ENCODE measurements at regions of chr18 and their contacts with region 1.

Region 1: GRCh38 chr18:48868468-48869466 is 82.0 kb downstream of the SMAD7 start:
- DNase-seq: peak; percentile 57 to 73
- ATAC-seq: peak; percentile 74 to 91 (median 85)
- H3K4me3 ChIP-seq: no peak overlapping the region
- H3K4me3 Mint-ChIP-seq: peak overlapping the region; percentile 76
- H3K27ac ChIP-seq: peak overlapping the region; percentile 83
- H3K27ac Mint-ChIP-seq: peak overlapping the region; percentile 88 to 92
- H3K4me1 ChIP-seq: peaks cover 56% of the 10 kb centered on the region
- H3K4me1 Mint-ChIP-seq: peaks cover 28 to 47% of the 10 kb centered on the region in 2 donors
- H3K27me3 ChIP-seq: no peaks in the 10 kb centered on the region
- H3K27me3 Mint-ChIP-seq: no peaks in the 10 kb centered on the region
- CTCF ChIP-seq: no peak

Region 2: GRCh38 chr18:48605408-48605845 is 263.3 kb before region 1 on chr18:
- intact Hi-C with region 1: no loop called
- DNase-seq: no peak
- ATAC-seq: no peak
- H3K4me3 ChIP-seq: no peak overlapping the region
- H3K4me3 Mint-ChIP-seq: no peak overlapping the region
- H3K27ac ChIP-seq: no peak overlapping the region
- H3K27ac Mint-ChIP-seq: no peak overlapping the region
- H3K4me1 ChIP-seq: peaks cover 3% of the 10 kb centered on the region
- H3K4me1 Mint-ChIP-seq: peaks cover 5 to 10% of the 10 kb centered on the region in 2 donors
- H3K27me3 ChIP-seq: no peaks in the 10 kb centered on the region
- H3K27me3 Mint-ChIP-seq: no peaks in the 10 kb centered on the region
- CTCF ChIP-seq: no peak

Region 3: DNA sequence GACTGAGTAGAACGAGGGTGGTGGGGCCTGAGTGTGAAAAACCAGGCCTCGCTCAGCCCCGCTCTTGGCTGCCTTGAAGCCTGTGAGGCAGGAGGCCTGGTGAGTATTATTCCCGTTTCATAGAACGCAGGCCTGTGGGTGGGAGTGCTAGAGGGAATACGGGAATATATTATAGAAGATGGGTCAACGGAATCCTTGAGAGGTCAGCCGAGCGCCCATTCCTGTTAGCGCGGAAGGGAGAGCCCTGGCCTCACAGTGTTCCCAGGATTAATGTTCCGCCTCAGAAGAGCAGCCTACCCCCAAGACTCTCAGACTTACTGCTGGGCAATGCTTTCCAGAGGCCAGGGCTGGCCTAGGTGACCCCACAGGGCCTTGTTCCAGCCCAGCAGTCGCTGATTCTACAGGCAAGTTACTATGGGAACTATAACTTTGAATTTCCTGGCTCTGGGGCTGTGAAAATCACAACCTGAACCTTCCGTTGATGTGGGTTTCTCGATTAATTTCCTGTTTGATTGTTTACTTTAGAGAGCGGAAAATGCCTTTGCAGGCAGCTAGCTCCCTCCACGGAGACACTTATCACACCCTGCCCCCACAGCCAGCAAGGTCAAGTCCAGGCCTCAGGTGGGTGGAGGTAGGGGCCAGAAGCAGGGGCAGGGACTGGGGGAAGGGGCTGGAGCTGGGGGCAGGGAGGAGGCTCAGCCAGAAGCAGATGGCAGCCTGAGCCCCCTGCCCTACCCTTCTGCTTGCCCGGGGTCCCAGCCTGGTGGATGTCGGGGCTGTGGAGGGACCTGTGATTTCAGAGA is 26.3 kb before region 1 on chr18:
- intact Hi-C with region 1: loop called (anchors 1 kb)
- DNase-seq: peak; percentile 66 to 85
- ATAC-seq: peak; percentile 73 to 88 (median 83)
- H3K4me3 ChIP-seq: no peak overlapping the region
- H3K4me3 Mint-ChIP-seq: peak overlapping the region; percentile 73
- H3K27ac ChIP-seq: peak overlapping the region; percentile 96
- H3K27ac Mint-ChIP-seq: peak overlapping the region; percentile 94 to 100
- H3K4me1 ChIP-seq: peaks cover 83% of the 10 kb centered on the region
- H3K4me1 Mint-ChIP-seq: peaks cover 85 to 97% of the 10 kb centered on the region in 2 donors
- H3K27me3 ChIP-seq: no peaks in the 10 kb centered on the region
- H3K27me3 Mint-ChIP-seq: no peaks in the 10 kb centered on the region
- CTCF ChIP-seq: no peak

Region 4: DNA sequence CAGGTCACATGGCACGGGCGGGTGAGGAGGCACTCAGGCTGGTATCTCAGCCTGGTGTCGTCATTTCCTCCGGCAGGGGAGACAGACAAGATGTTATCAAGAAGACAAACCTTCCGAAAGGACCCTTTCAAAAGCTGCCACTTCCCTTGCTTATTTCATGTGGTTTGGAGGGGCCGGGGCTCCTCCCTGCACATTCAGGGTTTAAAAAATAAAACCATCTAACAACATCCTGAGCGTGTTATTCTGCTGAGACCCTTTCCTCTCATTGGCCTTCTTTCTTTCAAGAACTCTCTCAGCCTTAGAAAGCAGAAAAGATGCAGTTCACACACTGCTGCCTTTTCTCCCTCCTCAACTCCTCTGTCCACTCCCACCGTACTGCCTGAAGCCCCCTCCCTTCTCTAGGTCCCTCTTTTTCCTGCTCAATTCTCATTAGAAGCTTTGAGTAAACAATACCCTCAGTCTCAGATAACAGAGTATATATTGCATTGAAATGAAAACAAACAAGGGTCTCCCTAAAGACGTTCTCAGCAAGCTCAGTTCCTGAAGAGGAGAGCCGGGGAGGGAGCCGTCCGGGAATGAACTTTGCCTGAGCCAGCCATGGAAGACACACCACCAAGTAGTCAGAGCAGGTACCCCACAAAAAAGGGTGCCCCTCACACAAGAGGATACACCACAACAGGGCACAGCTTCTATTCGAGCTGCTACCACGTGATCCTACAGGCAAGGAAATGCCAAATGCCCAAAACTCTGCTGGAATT is 72.3 kb after region 1 on chr18:
- intact Hi-C with region 1: loop called (anchors 2 kb)
- DNase-seq: peak; percentile 76 to 98
- ATAC-seq: peak; percentile 76 to 91 (median 84)
- H3K4me3 ChIP-seq: peak overlapping the region; percentile 1
- H3K4me3 Mint-ChIP-seq: peak overlapping the region; percentile 88
- H3K27ac ChIP-seq: peak overlapping the region; percentile 79
- H3K27ac Mint-ChIP-seq: peak overlapping the region; percentile 95 to 99
- H3K4me1 ChIP-seq: peaks cover 99% of the 10 kb centered on the region
- H3K4me1 Mint-ChIP-seq: peaks cover 89 to 95% of the 10 kb centered on the region in 2 donors
- H3K27me3 ChIP-seq: no peaks in the 10 kb centered on the region
- H3K27me3 Mint-ChIP-seq: no peaks in the 10 kb centered on the region
- CTCF ChIP-seq: no peak

Region 5: GRCh38 chr18:49139766-49140165 is 271.0 kb after region 1 on chr18:
- intact Hi-C with region 1: no loop called
- DNase-seq: no peak
- ATAC-seq: no peak
- H3K4me3 ChIP-seq: no peak overlapping the region
- H3K4me3 Mint-ChIP-seq: no peak overlapping the region
- H3K27ac ChIP-seq: no peak overlapping the region
- H3K27ac Mint-ChIP-seq: no peak overlapping the region
- H3K4me1 ChIP-seq: no peaks in the 10 kb centered on the region
- H3K4me1 Mint-ChIP-seq: peaks cover 0 to 3% of the 10 kb centered on the region in 2 donors
- H3K27me3 ChIP-seq: no peaks in the 10 kb centered on the region
- H3K27me3 Mint-ChIP-seq: no peaks in the 10 kb centered on the region
- CTCF ChIP-seq: no peak

Measured in natural killer cell (primary cell).